ENCODE measurements at regions of chr15 and their contacts with region 1.

Region 1: DNA sequence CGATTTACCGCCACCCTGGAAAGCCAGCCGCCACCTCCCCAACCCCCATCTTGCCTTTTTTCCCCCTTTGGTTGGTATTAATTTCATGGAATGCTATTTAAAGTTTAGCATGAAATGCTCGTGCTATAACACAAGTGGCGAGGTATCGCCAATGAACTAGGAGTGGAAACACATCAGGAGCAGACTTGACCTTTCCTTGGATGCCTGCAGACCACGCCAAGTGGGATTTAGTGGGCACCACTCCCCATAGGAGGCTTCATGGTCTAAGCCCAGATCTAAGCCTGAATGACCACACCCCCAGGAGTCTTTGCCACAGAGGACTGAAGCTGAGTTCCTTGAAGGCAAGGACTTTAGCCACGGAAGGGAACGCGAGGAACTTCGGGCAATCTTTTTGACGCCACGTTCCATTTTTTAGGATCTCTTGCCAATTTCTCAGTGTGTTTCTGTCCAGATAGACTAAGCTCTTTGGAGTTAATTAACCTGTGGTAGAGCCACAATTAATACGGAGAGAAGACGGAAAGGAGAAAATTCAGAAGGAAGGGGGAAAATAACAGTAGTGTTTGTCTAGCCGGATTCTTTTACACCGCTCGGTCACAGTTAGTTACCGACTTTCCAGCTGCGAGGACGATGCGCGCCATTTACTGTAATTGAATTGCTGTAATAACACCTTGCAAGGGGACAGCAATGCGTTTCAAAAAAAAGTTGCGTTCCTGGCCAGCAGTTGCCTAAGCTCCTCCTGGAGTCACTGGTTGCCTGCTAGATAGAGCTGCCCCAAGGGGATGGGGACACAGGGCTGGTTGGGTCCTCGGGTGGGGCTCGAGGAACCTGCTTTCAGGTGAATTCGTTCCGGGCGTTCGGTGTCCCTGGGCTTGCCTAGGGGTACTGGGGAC is 37.1 kb downstream of the NR2F2 start:
- DNase-seq: no peak
- H3K4me3 ChIP-seq: peak overlapping the region in 2 of 4 donors; percentile 8 to 29
- H3K27ac ChIP-seq: no peak overlapping the region
- H3K4me1 ChIP-seq: peaks cover 0 to 20% (median 18%) of the 10 kb centered on the region in 4 donors
- H3K27me3 ChIP-seq: peaks cover 30 to 63% (median 51%) of the 10 kb centered on the region in 3 donors
- CTCF ChIP-seq: no peak
- EP300 ChIP-seq: no peak
- POLR2A ChIP-seq: no peak

Region 2: GRCh38 chr15:96416934-96417759 is 49.6 kb after region 1 on chr15:
- intact Hi-C with region 1: loop called (anchors 2 kb)
- DNase-seq: no peak
- H3K4me3 ChIP-seq: peak overlapping the region in 2 of 4 donors; percentile 13 to 30
- H3K27ac ChIP-seq: no peak overlapping the region
- H3K4me1 ChIP-seq: peaks cover 0 to 20% (median 18%) of the 10 kb centered on the region in 4 donors
- H3K27me3 ChIP-seq: peaks cover 45 to 100% (median 92%) of the 10 kb centered on the region in 3 donors
- CTCF ChIP-seq: no peak
- EP300 ChIP-seq: no peak
- POLR2A ChIP-seq: no peak